Activated B cell treated with CpG ODN at 0.5 μM for 24 hours (primary cell): ENCODE measurements at regions of chr6 and their contacts with region 1.

Region 1: DNA sequence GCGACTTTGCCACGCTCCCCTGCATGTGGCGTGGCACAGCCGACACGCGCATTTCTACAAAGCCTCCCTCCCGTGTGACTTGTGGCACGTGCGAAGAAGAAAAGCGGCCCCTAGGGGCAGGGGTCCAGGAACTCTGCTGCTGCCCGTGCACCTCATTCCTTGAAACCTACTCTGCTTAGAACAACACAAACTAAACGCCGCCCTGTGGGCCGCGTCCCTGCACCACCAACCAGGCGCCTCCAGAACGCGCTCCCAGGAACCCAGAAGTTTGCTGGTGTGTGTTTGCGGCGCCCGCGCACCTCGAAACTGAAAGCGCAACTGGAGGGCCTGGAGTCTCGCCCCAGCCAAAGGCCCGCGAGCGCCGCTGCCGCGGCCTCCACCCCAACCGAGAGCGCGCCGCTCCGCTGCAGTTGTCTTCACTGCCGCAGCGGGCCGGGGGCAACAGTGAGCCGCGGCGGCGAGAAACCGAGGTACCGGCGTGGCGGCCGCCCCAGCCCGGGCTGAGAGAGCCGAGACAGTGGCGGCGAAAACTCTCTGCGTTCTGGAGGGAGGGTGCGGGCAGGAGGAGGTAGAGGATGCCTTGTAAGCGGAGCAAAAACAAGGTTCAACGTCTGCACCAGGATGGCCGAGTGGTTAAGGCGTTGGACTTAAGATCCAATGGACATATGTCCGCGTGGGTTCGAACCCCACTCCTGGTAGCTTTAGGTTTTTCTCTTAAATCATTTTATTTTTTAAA is 65.8 kb downstream of the STX11 start:
- DNase-seq: peak; percentile 87
- ATAC-seq: peak; percentile 85
- H3K4me3 Mint-ChIP-seq: peak overlapping the region; percentile 97
- H3K27ac Mint-ChIP-seq: peak overlapping the region; percentile 100
- H3K4me1 Mint-ChIP-seq: peaks cover 36% of the 10 kb centered on the region
- H3K27me3 Mint-ChIP-seq: peaks cover 2% of the 10 kb centered on the region
- CTCF ChIP-seq: no peak

Region 2: GRCh38 chr6:143575440-143575839 is 640.7 kb before region 1 on chr6:
- CTCF ChIA-PET with region 1: interaction called, 5 read pairs
- POLR2A ChIA-PET with region 1: no interaction called
- intact Hi-C with region 1: loop called (anchors 1 kb)
- DNase-seq: no peak
- ATAC-seq: peak; percentile 99
- H3K4me3 Mint-ChIP-seq: no peak overlapping the region
- H3K27ac Mint-ChIP-seq: no peak overlapping the region
- H3K4me1 Mint-ChIP-seq: no peaks in the 10 kb centered on the region
- H3K27me3 Mint-ChIP-seq: no peaks in the 10 kb centered on the region
- CTCF ChIP-seq: peak; percentile 26

Region 3: DNA sequence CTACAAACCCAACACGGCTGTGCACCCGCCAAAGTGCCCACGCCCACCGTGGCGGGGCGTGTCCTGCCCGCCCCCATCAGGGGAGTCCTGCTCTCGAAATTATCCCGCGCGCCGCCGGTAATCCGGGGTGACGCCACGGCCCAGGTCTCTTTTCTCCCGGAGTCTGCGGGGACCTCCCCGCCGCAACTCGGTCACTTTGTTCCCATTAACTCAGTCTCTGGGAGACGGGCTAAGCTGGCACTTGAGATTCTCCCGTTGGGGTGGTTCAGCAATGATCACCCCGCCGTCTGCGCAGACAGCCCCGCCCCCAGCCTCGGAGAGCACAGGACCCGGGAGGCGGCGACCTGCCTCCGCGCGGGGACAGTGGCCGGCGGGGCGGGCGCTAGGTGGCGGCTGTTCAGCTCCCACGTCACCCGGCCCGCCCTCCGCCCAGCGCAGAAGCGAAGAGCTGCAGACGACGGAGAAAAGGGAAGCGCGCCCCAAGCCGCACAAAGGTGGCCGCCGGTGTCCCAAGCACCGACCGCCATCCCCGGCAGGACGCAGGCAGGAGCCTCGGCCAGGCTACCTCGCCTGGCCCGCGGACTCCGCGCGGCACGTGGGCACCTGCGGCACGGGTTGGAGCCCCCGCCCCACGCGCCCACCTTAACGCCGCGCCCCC is 152.2 kb before region 1 on chr6:
- CTCF ChIA-PET with region 1: interaction called, 3 read pairs
- POLR2A ChIA-PET with region 1: interaction called, 10 read pairs
- intact Hi-C with region 1: loop called (anchors 1 kb)
- DNase-seq: peak; percentile 91
- ATAC-seq: peak; percentile 93
- H3K4me3 Mint-ChIP-seq: peak overlapping the region; percentile 94
- H3K27ac Mint-ChIP-seq: peak overlapping the region; percentile 89
- H3K4me1 Mint-ChIP-seq: peaks cover 36% of the 10 kb centered on the region
- H3K27me3 Mint-ChIP-seq: no peaks in the 10 kb centered on the region
- CTCF ChIP-seq: no peak

Region 4: DNA sequence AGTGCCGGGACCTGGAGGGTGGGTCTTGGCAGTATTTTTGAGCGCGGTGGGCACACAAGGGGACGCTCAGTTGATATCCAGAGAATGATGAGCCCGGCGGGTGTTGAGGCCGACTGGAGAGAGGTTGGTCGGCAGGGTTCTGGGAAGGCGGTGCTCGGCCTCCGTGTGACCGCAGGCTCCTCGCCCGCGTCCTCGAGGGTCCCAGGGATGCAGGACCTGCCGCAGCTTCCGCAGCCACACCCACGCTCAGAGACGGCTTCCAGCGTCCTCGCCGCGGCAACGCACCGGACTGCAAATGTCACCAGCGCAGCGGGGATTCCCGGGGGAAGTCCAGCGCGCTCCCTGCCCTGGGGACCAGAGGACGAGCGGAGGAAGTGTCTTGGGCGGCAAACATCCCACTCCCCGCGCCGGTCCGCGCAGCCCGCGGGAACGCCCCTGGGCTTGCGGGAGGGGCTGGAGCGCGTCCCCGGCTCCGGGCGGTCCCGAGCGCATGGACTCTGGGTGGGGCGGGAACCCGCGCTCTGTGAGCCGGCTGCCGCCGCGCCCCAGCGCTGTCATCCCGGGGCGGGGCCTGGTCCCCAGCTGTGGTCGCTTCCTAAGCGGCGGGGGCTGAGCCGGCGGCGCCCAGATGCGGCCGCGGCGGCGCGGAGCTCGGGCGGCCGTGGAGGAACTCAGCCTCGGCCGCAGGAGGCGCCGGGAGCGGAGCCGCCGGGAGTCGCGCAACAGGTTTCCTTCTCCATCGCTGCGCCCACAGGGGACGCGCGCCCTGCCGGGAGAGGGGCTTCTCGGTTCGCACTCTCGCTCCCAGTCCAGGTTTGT is 66.0 kb before region 1 on chr6 and contains the start of gene STX11:
- CTCF ChIA-PET with region 1: interaction called, 6 read pairs
- POLR2A ChIA-PET with region 1: interaction called, 21 read pairs
- intact Hi-C with region 1: loop called (anchors 1 kb)
- DNase-seq: peak; percentile 84
- ATAC-seq: peak; percentile 72
- H3K4me3 Mint-ChIP-seq: peak within 1 kb of the TSS; percentile 92
- H3K27ac Mint-ChIP-seq: peak within 1 kb of the TSS; percentile 96
- H3K4me1 Mint-ChIP-seq: peaks cover 46% of the 10 kb centered on the region
- H3K27me3 Mint-ChIP-seq: no peaks in the 10 kb centered on the region
- CTCF ChIP-seq: no peak
- total RNA-seq, gene STX11: 23.3 and 26.4 TPM in 2 replicates

Region 5: DNA sequence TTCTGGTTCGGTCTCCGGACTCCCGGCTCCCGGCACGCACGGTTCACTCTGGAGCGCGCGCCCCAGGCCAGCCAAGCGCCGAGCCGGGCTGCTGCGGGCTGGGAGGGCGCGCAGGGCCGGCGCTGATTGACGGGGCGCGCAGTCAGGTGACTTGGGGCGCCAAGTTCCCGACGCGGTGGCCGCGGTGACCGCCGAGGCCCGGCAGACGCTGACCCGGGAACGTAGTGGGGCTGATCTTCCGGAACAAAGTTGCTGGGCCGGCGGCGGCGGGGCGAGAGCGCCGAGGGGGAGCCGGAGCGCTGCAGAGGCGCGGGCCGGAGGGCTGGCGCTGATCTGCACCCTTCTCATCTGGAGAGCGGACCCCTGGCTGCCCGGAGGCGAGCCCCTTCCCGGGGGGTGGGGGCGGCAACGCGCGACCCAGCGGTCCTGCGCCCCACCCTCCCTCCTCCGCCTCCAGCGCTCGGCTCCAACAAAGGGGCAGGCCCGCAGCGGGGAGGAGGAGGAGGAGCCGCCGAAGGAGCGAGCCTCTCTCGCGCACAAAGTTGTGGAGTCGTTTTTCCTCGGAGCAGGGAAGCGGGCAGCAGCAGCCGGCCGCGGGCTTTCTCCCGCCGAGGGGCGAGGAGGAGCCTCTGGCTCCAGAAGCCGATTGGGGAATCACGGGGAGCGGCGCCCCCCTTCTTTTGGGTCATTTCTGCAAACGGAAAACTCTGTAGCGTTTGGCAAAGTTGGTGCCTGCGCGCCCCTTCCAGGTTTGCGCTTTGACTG is 68.9 kb after region 1 on chr6 and contains the start of gene UTRN:
- CTCF ChIA-PET with region 1: interaction called, 3 read pairs
- POLR2A ChIA-PET with region 1: interaction called, 3 read pairs
- intact Hi-C with region 1: loop called (anchors 1 kb)
- DNase-seq: peak; percentile 44
- ATAC-seq: peak; percentile 54
- H3K4me3 Mint-ChIP-seq: peak within 1 kb of the TSS; percentile 94
- H3K27ac Mint-ChIP-seq: no peak within 1 kb of the TSS
- H3K4me1 Mint-ChIP-seq: peaks cover 19% of the 10 kb centered on the region
- H3K27me3 Mint-ChIP-seq: peaks cover 6% of the 10 kb centered on the region
- CTCF ChIP-seq: no peak
- total RNA-seq, gene UTRN: 52.2 and 53.5 TPM in 2 replicates

Region 6: GRCh38 chr6:144314003-144314485 is 97.9 kb after region 1 on chr6:
- CTCF ChIA-PET with region 1: no interaction called
- POLR2A ChIA-PET with region 1: no interaction called
- intact Hi-C with region 1: no loop called
- DNase-seq: no peak
- ATAC-seq: no peak
- H3K4me3 Mint-ChIP-seq: no peak overlapping the region
- H3K27ac Mint-ChIP-seq: no peak overlapping the region
- H3K4me1 Mint-ChIP-seq: peaks cover 14% of the 10 kb centered on the region
- H3K27me3 Mint-ChIP-seq: no peaks in the 10 kb centered on the region
- CTCF ChIP-seq: no peak

Region 7: GRCh38 chr6:144415014-144415413 is 198.9 kb after region 1 on chr6:
- CTCF ChIA-PET with region 1: no interaction called
- POLR2A ChIA-PET with region 1: no interaction called
- intact Hi-C with region 1: loop called (anchors 5 kb)
- DNase-seq: no peak
- ATAC-seq: no peak
- H3K4me3 Mint-ChIP-seq: no peak overlapping the region
- H3K27ac Mint-ChIP-seq: no peak overlapping the region
- H3K4me1 Mint-ChIP-seq: peaks cover 46% of the 10 kb centered on the region
- H3K27me3 Mint-ChIP-seq: no peaks in the 10 kb centered on the region
- CTCF ChIP-seq: no peak

Region 8: DNA sequence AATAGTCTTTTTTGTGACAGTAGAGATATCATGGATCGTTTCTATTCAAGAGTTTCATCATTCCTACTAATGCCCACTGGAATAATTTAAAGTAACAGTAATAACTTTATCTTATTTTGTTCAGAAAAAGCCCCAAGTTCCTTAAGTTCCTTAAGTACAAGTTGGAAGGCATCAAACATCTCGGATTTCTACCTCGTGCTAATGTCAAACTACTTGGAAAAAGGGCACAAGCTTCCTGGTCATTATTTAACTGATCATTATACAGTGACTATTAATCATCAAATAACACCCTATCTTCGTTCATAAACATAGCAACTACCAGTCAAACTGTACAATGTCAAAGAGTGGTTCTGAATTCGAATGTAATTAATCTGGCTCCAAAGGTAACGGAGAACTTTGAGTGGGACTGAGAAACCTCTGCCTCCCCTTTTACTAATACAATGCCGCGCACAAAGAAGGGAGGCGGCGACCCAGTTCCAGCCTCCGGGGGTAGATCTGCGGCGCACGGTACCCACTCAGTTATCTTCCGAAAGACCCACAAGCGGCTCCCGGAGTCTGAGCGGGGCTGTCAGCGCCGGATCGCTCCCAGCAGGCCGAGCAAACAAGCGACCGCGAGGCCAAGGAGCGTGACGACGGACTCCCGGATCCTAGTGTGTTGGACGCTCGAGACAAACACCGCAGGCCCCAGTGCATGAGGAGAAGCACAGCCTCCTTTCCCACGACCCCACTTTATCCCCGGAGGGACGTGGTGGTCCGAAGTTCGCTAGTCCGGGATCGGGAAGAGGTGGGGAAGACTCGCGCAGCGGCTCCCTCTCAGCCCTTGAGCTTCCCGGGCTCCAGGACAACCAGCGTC is 1747.3 kb after region 1 on chr6:
- CTCF ChIA-PET with region 1: no interaction called
- POLR2A ChIA-PET with region 1: no interaction called
- intact Hi-C with region 1: loop called (anchors 5 kb)
- DNase-seq: peak; percentile 44
- ATAC-seq: peak; percentile 4
- H3K4me3 Mint-ChIP-seq: peak overlapping the region; percentile 99
- H3K27ac Mint-ChIP-seq: peak overlapping the region; percentile 96
- H3K4me1 Mint-ChIP-seq: peaks cover 45% of the 10 kb centered on the region
- H3K27me3 Mint-ChIP-seq: no peaks in the 10 kb centered on the region
- CTCF ChIP-seq: no peak